ENCODE measurements at regions of chr17 and their contacts with region 1.

Region 1: GRCh38 chr17:77096570-77097214 is 44.1 kb upstream of the SEC14L1 start:
- DNase-seq: peak; percentile 73
- ATAC-seq: peak; percentile 83
- H3K4me3 ChIP-seq: no peak overlapping the region
- H3K27ac ChIP-seq: peak overlapping the region; percentile 28; the same call in 1 of the 2 replicates
- H3K4me1 ChIP-seq: peaks cover 8% of the 10 kb centered on the region; the same call in 1 of the 2 replicates
- H3K27me3 ChIP-seq: no peaks in the 10 kb centered on the region
- CTCF ChIP-seq: peak; percentile 79
- POLR2A ChIP-seq: no peak
- RAD21 ChIP-seq: peak; percentile 79

Region 2: GRCh38 chr17:77076124-77076872 is 20.4 kb before region 1 on chr17:
- CTCF ChIA-PET with region 1: no interaction called
- POLR2A ChIA-PET with region 1: no interaction called
- dilution Hi-C with region 1: no loop called
- in situ Hi-C with region 1: no loop called
- intact Hi-C with region 1: no loop called
- DNase-seq: peak; percentile 9
- ATAC-seq: peak; percentile 75
- H3K4me3 ChIP-seq: no peak overlapping the region
- H3K27ac ChIP-seq: no peak overlapping the region
- H3K4me1 ChIP-seq: no peaks in the 10 kb centered on the region
- H3K27me3 ChIP-seq: peaks cover 38% of the 10 kb centered on the region
- CTCF ChIP-seq: no peak
- POLR2A ChIP-seq: no peak
- RAD21 ChIP-seq: no peak

Region 3: DNA sequence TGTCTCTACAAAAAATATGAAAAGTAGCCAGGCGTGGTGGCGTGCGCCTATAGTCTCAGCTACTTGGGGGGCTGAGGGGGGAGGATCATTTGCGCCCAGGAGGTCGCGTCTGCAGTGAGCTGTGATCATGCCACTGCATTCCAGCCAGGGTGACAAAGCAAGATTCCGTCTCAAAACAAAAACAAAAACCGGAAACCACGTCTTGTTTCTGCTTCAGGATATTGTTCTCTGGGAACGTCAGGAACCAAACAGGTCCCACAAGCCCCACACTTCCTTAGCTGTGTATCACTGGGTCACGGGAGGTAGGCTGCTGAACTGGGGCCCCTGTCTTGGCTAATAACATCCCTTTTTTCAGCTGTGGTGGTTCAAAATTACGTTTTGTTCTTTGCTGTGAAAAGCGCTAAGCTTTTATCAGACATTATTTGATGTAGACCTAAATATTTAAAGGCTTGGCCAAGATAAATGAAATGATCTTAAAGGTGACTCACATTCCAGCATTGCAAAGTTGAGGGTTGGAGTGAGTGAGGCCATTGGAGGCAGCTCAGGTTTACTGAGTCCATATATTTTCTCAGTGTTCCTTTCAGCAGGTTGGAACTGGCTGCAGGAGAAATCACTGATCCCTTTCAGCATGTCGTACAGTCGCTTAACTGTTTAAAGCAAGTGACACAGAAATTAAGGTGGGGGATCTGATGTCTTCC is 27.6 kb after region 1 on chr17:
- CTCF ChIA-PET with region 1: interaction called, 5 read pairs
- POLR2A ChIA-PET with region 1: no interaction called
- dilution Hi-C with region 1: no loop called
- in situ Hi-C with region 1: no loop called
- intact Hi-C with region 1: loop called (anchors 2 kb)
- DNase-seq: peak; percentile 68
- ATAC-seq: peak; percentile 7; the same call in 1 of the 2 replicates
- H3K4me3 ChIP-seq: no peak overlapping the region
- H3K27ac ChIP-seq: peak overlapping the region; percentile 58
- H3K4me1 ChIP-seq: peaks cover 26% of the 10 kb centered on the region
- H3K27me3 ChIP-seq: no peaks in the 10 kb centered on the region
- CTCF ChIP-seq: no peak
- POLR2A ChIP-seq: no peak
- RAD21 ChIP-seq: no peak

Region 4: DNA sequence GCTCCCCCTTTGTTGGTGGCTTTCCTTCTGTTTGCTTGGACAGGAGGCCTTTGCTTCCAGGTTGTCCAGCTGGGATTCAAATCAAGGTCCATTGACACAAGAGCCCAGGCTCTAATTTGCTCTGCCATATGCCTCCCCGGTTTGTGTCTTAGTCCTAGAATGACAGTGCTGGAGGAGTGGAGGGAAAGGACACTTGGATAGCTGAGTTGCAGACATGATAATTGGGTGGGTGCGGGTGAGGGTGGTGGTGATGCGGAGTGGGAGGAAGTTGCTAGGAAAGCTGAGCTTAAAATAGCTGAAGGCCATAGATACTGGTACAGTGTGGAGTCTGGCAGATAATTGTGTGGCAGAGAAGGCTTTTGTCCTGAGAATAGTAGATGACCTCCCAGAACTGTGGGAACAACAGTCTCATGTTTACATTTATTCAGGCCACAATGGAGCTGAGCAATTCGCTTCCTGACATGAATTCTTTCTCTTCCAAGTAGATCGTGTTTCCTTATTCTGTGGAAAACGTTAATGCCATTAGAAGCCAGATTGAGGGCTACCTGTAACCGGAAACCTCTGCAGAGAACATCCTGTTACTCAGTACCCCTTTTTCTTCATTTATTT is 67.9 kb after region 1 on chr17:
- CTCF ChIA-PET with region 1: no interaction called
- POLR2A ChIA-PET with region 1: no interaction called
- dilution Hi-C with region 1: no loop called
- in situ Hi-C with region 1: no loop called
- intact Hi-C with region 1: no loop called
- DNase-seq: peak; percentile 53
- ATAC-seq: peak; percentile 55
- H3K4me3 ChIP-seq: no peak overlapping the region
- H3K27ac ChIP-seq: peak overlapping the region; percentile 25; the same call in 1 of the 2 replicates
- H3K4me1 ChIP-seq: peaks cover 17% of the 10 kb centered on the region
- H3K27me3 ChIP-seq: no peaks in the 10 kb centered on the region
- CTCF ChIP-seq: no peak
- POLR2A ChIP-seq: no peak
- RAD21 ChIP-seq: no peak

Region 5: DNA sequence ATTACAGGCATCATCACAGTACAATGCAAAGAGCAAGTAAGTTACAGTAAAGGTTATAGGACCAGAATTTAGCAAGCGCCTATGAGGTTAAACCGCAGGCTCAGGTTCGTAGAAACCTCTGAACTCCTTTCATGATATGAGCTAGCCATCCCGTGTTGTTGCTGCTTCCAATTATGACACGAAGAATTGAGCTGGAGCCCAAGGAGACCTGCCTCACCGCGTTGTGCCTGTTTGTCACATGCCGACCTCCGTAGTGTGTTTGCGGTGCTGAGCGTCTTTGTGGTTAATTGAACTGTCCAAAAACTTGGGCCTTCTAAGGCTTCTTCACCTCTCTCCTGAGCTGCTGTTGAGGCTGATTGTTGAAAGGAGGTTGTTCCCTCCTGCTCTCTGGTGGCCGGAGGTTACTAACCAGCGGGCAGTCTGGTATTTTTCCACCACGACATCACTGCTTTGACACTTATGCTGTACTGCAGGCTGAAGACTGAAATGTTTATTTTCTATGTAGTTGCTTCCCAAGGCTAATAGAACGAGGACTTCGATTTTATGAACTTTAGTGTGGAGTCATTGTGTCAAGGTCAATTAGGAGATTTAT is 111.6 kb after region 1 on chr17:
- CTCF ChIA-PET with region 1: interaction called, 5 read pairs
- POLR2A ChIA-PET with region 1: interaction called, 4 read pairs
- dilution Hi-C with region 1: no loop called
- in situ Hi-C with region 1: no loop called
- intact Hi-C with region 1: loop called (anchors 5 kb)
- DNase-seq: peak; percentile 59
- ATAC-seq: peak; percentile 85
- H3K4me3 ChIP-seq: no peak overlapping the region
- H3K27ac ChIP-seq: no peak overlapping the region
- H3K4me1 ChIP-seq: no peaks in the 10 kb centered on the region; the same call in 1 of the 2 replicates
- H3K27me3 ChIP-seq: no peaks in the 10 kb centered on the region
- CTCF ChIP-seq: peak; percentile 43
- POLR2A ChIP-seq: no peak
- RAD21 ChIP-seq: peak; percentile 23; the same call in 1 of the 2 replicates